ENCODE measurements at regions of chr4 and their contacts with region 1.

Region 1: GRCh38 chr4:152937336-152938236 is 1.5 kb downstream of the FHDC1 start:
- DNase-seq: peak; percentile 42
- H3K4me3 Mint-ChIP-seq: peak overlapping the region; percentile 84
- H3K27ac Mint-ChIP-seq: peak overlapping the region; percentile 2
- H3K4me1 Mint-ChIP-seq: peaks cover 16% of the 10 kb centered on the region
- H3K27me3 Mint-ChIP-seq: no peaks in the 10 kb centered on the region
- CTCF ChIP-seq: no peak

Region 2: GRCh38 chr4:152672206-152673092 is 265.1 kb before region 1 on chr4:
- CTCF ChIA-PET with region 1: no interaction called
- POLR2A ChIA-PET with region 1: no interaction called
- intact Hi-C with region 1: no loop called
- DNase-seq: no peak
- H3K4me3 Mint-ChIP-seq: no peak overlapping the region
- H3K27ac Mint-ChIP-seq: no peak overlapping the region
- H3K4me1 Mint-ChIP-seq: peaks cover 13% of the 10 kb centered on the region
- H3K27me3 Mint-ChIP-seq: no peaks in the 10 kb centered on the region
- CTCF ChIP-seq: no peak

Region 3: GRCh38 chr4:152850377-152850776 is 87.2 kb before region 1 on chr4:
- CTCF ChIA-PET with region 1: interaction called, 12 read pairs
- POLR2A ChIA-PET with region 1: interaction called, 12 read pairs
- intact Hi-C with region 1: loop called (anchors 1 kb)
- DNase-seq: peak; percentile 61
- H3K4me3 Mint-ChIP-seq: peak overlapping the region; percentile 67
- H3K27ac Mint-ChIP-seq: peak overlapping the region; percentile 74
- H3K4me1 Mint-ChIP-seq: peaks cover 22% of the 10 kb centered on the region
- H3K27me3 Mint-ChIP-seq: no peaks in the 10 kb centered on the region
- CTCF ChIP-seq: no peak

Region 4: GRCh38 chr4:152965611-152966010 is 28.0 kb after region 1 on chr4:
- CTCF ChIA-PET with region 1: interaction called, 6 read pairs
- POLR2A ChIA-PET with region 1: interaction called, 49 read pairs
- intact Hi-C with region 1: loop called (anchors 5 kb)
- DNase-seq: no peak
- H3K4me3 Mint-ChIP-seq: no peak overlapping the region
- H3K27ac Mint-ChIP-seq: no peak overlapping the region
- H3K4me1 Mint-ChIP-seq: peaks cover 15% of the 10 kb centered on the region
- H3K27me3 Mint-ChIP-seq: no peaks in the 10 kb centered on the region
- CTCF ChIP-seq: no peak

Region 5: GRCh38 chr4:152972821-152973628 is 35.4 kb after region 1 on chr4:
- CTCF ChIA-PET with region 1: interaction called, 6 read pairs
- POLR2A ChIA-PET with region 1: interaction called, 49 read pairs
- intact Hi-C with region 1: loop called (anchors 5 kb)
- DNase-seq: peak; percentile 69
- H3K4me3 Mint-ChIP-seq: no peak overlapping the region
- H3K27ac Mint-ChIP-seq: no peak overlapping the region
- H3K4me1 Mint-ChIP-seq: peaks cover 36% of the 10 kb centered on the region
- H3K27me3 Mint-ChIP-seq: no peaks in the 10 kb centered on the region
- CTCF ChIP-seq: no peak

Region 6: DNA sequence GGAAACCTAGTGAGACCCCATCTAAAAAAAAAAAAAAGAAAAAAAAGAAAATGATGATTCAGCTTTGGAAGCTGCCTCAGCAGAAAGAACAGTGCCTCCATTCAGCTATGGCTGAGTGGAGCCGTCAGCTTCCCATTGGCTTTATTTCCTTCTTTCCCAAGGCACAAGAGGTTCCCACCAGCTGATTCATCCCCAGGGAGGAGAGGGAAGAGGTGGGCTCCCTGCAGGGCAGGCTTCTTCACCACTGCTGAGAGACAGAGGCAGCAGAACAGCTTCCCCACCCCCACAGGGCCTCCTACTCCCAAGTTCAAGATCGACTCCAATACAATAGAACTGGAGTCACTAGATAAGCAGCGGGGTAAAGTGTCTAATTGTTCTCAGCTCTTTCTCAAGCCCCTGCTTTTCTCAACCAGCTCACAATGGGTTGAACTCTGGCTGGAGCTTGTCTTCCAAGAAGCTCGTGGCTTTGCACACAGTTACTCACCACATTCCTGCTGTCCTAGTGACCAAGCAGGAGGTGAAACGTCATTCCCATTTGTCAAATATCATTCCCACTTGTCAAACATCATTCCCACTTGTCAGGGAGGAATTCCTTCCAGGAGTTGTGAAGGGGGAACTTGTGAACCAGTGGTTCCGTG is 46.3 kb after region 1 on chr4:
- CTCF ChIA-PET with region 1: interaction called, 3 read pairs
- POLR2A ChIA-PET with region 1: interaction called, 10 read pairs
- intact Hi-C with region 1: no loop called
- DNase-seq: peak; percentile 58
- H3K4me3 Mint-ChIP-seq: no peak overlapping the region
- H3K27ac Mint-ChIP-seq: no peak overlapping the region
- H3K4me1 Mint-ChIP-seq: peaks cover 19% of the 10 kb centered on the region
- H3K27me3 Mint-ChIP-seq: no peaks in the 10 kb centered on the region
- CTCF ChIP-seq: no peak

Region 7: GRCh38 chr4:152996108-152996571 is 58.6 kb after region 1 on chr4:
- CTCF ChIA-PET with region 1: interaction called, 5 read pairs
- POLR2A ChIA-PET with region 1: interaction called, 34 read pairs
- intact Hi-C with region 1: no loop called
- DNase-seq: no peak
- H3K4me3 Mint-ChIP-seq: no peak overlapping the region
- H3K27ac Mint-ChIP-seq: peak overlapping the region; percentile 9
- H3K4me1 Mint-ChIP-seq: peaks cover 18% of the 10 kb centered on the region
- H3K27me3 Mint-ChIP-seq: no peaks in the 10 kb centered on the region
- CTCF ChIP-seq: no peak